ENCODE measurements at regions of chr15 and their contacts with region 1.

Region 1: GRCh38 chr15:43510200-43511011 is 7.0 kb upstream of the MAP1A start:
- DNase-seq: peak; percentile 96
- ATAC-seq: peak; percentile 96
- H3K4me3 Mint-ChIP-seq: peak overlapping the region; percentile 92
- H3K27ac Mint-ChIP-seq: peak overlapping the region; percentile 94
- H3K4me1 Mint-ChIP-seq: peaks cover 14% of the 10 kb centered on the region
- H3K27me3 Mint-ChIP-seq: peaks cover 8% of the 10 kb centered on the region
- CTCF ChIP-seq: no peak

Region 2: GRCh38 chr15:43329960-43330779 is 180.2 kb before region 1 on chr15 and contains the start of gene LCMT2:
- CTCF ChIA-PET with region 1: no interaction called
- POLR2A ChIA-PET with region 1: no interaction called
- intact Hi-C with region 1: loop called (anchors 2 kb)
- DNase-seq: peak; percentile 85
- ATAC-seq: peak; percentile 85
- H3K4me3 Mint-ChIP-seq: peak within 1 kb of the TSS; percentile 97
- H3K27ac Mint-ChIP-seq: peak within 1 kb of the TSS; percentile 99
- H3K4me1 Mint-ChIP-seq: peaks cover 32% of the 10 kb centered on the region
- H3K27me3 Mint-ChIP-seq: no peaks in the 10 kb centered on the region
- CTCF ChIP-seq: no peak
- total RNA-seq, gene LCMT2: 15.5 and 17.1 TPM in 2 replicates

Region 3: GRCh38 chr15:43440721-43441281 is 69.6 kb before region 1 on chr15:
- CTCF ChIA-PET with region 1: interaction called, 9 read pairs
- POLR2A ChIA-PET with region 1: no interaction called
- intact Hi-C with region 1: loop called (anchors 2 kb)
- DNase-seq: no peak
- ATAC-seq: no peak
- H3K4me3 Mint-ChIP-seq: no peak overlapping the region
- H3K27ac Mint-ChIP-seq: no peak overlapping the region
- H3K4me1 Mint-ChIP-seq: no peaks in the 10 kb centered on the region
- H3K27me3 Mint-ChIP-seq: no peaks in the 10 kb centered on the region
- CTCF ChIP-seq: no peak

Region 4: GRCh38 chr15:43492673-43493601 is 17.5 kb before region 1 on chr15 and contains the start of gene TP53BP1:
- CTCF ChIA-PET with region 1: interaction called, 7 read pairs
- POLR2A ChIA-PET with region 1: interaction called, 30 read pairs
- intact Hi-C with region 1: loop called (anchors 1 kb)
- DNase-seq: peak; percentile 87
- ATAC-seq: peak; percentile 99
- H3K4me3 Mint-ChIP-seq: peak within 1 kb of the TSS; percentile 98
- H3K27ac Mint-ChIP-seq: peak within 1 kb of the TSS; percentile 95
- H3K4me1 Mint-ChIP-seq: peaks cover 19% of the 10 kb centered on the region
- H3K27me3 Mint-ChIP-seq: no peaks in the 10 kb centered on the region
- CTCF ChIP-seq: no peak
- total RNA-seq, gene TP53BP1: 53.9 and 54.6 TPM in 2 replicates

Region 5: DNA sequence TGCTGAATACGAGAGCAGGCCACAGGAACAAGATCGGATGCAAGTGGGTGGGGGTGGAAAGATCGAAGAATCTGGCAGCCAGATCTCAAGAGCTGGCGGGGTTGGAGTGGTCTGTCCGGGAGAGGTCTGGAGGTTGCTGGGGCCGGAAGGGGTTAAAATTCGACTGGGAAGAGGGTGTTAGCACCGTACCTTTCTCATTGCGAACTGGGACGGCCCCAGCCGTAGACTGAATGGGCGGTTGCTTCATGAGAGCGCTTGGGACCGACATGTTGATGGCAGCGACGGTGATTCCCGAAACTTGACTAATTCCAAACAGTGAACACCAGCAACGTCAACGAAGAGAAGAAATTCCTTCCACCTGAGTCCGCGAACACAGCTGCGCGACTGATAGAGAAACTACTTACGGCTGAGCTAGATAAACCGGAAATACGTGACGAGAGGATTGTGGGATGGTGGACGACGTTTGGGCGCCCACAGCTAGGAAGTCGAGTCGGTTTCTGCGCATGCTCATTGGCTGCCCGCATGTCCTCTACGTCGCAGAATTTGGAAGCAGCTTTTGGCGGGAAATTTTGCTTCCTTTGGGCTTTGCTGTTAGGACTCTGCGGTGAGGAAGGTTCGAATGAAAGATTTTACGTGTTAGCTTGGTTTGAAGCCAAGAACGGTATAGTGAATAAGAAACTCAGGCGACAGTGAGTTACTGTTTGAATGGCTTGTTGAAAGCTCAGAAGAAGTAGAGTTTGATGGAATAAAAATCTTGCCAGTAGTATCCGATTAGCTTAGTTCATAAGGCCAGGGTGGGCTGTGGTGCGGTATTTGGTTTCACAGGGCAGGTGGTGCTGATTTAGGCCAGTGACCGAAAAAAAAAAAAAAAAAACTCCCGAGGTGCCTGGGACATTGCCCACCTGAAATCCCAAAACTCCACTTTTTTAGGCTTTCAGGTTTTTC is 314.2 kb after region 1 on chr15 and contains the start of gene MFAP1:
- CTCF ChIA-PET with region 1: no interaction called
- POLR2A ChIA-PET with region 1: no interaction called
- intact Hi-C with region 1: loop called (anchors 10 kb)
- DNase-seq: peak; percentile 72
- ATAC-seq: peak; percentile 86
- H3K4me3 Mint-ChIP-seq: peak within 1 kb of the TSS; percentile 99
- H3K27ac Mint-ChIP-seq: peak within 1 kb of the TSS; percentile 99
- H3K4me1 Mint-ChIP-seq: peaks cover 62% of the 10 kb centered on the region
- H3K27me3 Mint-ChIP-seq: no peaks in the 10 kb centered on the region
- CTCF ChIP-seq: no peak
- total RNA-seq, gene MFAP1: 26.1 and 27.9 TPM in 2 replicates

Measured in activated B cell treated with CpG ODN at 0.5 μM for 24 hours (primary cell).